H1 (cell line): ENCODE measurements at regions of chr4 and their contacts with region 1.

Region 1: DNA sequence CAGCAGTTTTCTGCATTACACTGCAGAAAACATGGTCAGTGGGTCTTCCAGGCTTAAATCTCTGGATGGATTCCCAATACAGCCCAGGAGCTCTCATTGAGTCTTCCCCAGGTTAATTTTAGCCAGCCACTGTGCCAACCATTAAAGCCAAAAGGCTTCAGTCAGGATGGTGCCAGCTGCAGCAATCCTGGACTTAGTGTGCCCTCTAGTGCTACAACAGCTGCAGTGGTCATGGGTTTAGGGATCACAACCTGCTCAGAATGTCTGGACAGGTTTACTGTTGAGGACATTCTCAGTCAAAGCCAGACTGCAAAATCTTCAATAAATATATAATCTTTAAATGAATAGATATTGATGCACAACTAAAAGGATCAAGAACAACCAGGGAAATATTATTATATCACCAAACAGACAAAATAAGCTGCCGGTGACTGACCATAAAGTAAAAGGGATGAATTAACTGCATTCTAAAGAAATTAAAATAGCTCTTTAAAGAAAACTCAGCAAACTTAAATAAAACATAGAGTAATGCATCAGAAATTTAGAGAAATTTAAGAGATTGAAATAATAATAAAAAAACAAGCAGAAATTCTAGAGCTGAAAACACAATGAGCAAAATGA is 639.9 kb downstream of the SPOCK3 start:
- DNase-seq: peak; percentile 23 to 54
- H3K4me3 ChIP-seq: no peak overlapping the region
- H3K27ac ChIP-seq: no peak overlapping the region
- H3K4me1 ChIP-seq: no peaks in the 10 kb centered on the region
- H3K27me3 ChIP-seq: no peaks in the 10 kb centered on the region
- CTCF ChIP-seq: peak; percentile 87 to 95 (median 93)
- EP300 ChIP-seq: no peak
- POLR2A ChIP-seq: no peak
- RAD21 ChIP-seq: peak; percentile 99 to 100

Region 2: DNA sequence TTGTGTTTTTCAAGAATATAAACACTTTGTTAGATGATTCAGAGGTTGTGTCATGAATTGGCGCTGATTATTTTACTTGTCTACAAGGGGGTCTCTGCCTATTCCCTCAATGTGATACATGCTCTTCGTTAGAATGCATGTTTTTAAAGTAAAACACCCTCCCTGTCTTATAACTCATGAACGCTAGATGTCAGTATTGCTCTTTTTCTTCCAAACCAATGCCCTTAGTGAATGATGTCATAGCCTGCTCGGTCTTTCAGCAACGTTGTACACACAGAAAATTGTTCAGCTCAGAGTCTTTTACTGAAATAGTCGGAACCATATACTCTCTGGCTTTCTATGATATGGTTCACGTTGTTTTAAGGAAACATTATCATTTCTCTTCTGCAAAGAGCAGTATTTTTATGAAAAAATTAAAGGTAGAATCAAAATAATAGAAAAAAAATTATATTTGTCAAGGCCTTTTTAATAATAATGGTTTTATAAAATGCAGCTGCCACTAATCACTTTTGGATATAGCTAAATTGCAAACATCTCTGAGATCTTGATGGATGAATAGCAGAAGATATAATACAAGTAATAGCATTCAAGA is 428.5 kb before region 1 on chr4:
- CTCF ChIA-PET with region 1: interaction called, 47 read pairs
- POLR2A ChIA-PET with region 1: no interaction called
- DNase-seq: peak in 1 of 2 experiments; percentile 5
- H3K4me3 ChIP-seq: no peak overlapping the region
- H3K27ac ChIP-seq: no peak overlapping the region
- H3K4me1 ChIP-seq: no peaks in the 10 kb centered on the region
- H3K27me3 ChIP-seq: no peaks in the 10 kb centered on the region
- CTCF ChIP-seq: peak in 2 of 3 experiments; percentile 67 to 70; a peak in 3 of 4 replicates
- EP300 ChIP-seq: no peak
- POLR2A ChIP-seq: no peak
- RAD21 ChIP-seq: peak; percentile 91 to 94

Region 3: GRCh38 chr4:166324321-166324720 is 270.1 kb before region 1 on chr4:
- CTCF ChIA-PET with region 1: interaction called, 49 read pairs
- POLR2A ChIA-PET with region 1: no interaction called
- DNase-seq: peak in 1 of 2 experiments; percentile 63
- H3K4me3 ChIP-seq: no peak overlapping the region
- H3K27ac ChIP-seq: no peak overlapping the region
- H3K4me1 ChIP-seq: no peaks in the 10 kb centered on the region
- H3K27me3 ChIP-seq: no peaks in the 10 kb centered on the region
- CTCF ChIP-seq: peak in 2 of 3 experiments; percentile 59 to 73; a peak in 3 of 4 replicates
- EP300 ChIP-seq: no peak
- POLR2A ChIP-seq: no peak
- RAD21 ChIP-seq: peak; percentile 74 to 80

Region 4: GRCh38 chr4:166501941-166502382 is 92.5 kb before region 1 on chr4:
- CTCF ChIA-PET with region 1: interaction called, 43 read pairs
- POLR2A ChIA-PET with region 1: no interaction called
- DNase-seq: peak; percentile 56 to 67
- H3K4me3 ChIP-seq: no peak overlapping the region
- H3K27ac ChIP-seq: no peak overlapping the region
- H3K4me1 ChIP-seq: peaks cover 0 to 4% (median under 1%) of the 10 kb centered on the region in 4 experiments; a peak in 4 of 7 replicates
- H3K27me3 ChIP-seq: no peaks in the 10 kb centered on the region; a peak in 1 of 7 replicates
- CTCF ChIP-seq: peak; percentile 70 to 92 (median 73)
- EP300 ChIP-seq: no peak
- POLR2A ChIP-seq: no peak
- RAD21 ChIP-seq: peak; percentile 78 to 86

Region 5: DNA sequence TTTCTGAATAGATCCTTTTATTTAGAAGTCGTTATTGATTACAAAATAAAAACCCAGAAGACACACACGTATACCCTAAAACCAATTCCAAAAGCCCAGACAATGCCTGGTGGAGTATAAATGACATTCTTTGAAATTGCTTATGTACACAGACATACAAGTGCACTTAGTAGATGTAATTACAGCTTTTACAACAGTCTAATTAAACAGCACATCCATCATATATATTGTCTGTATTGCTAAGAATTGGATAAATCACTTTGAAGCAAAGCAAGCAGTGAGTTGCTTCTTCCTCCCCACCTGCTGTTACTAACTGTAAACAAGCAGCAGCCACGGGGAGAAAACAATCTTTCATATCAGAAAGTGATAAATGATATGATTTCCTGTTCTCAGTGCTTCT is 75.7 kb before region 1 on chr4:
- CTCF ChIA-PET with region 1: interaction called, 14 read pairs
- POLR2A ChIA-PET with region 1: no interaction called
- DNase-seq: no peak
- H3K4me3 ChIP-seq: no peak overlapping the region
- H3K27ac ChIP-seq: no peak overlapping the region
- H3K4me1 ChIP-seq: no peaks in the 10 kb centered on the region
- H3K27me3 ChIP-seq: no peaks in the 10 kb centered on the region
- CTCF ChIP-seq: no peak
- EP300 ChIP-seq: no peak
- POLR2A ChIP-seq: no peak
- RAD21 ChIP-seq: no peak